ENCODE measurements at regions of chr5 and their contacts with region 1.

Region 1: GRCh38 chr5:126519634-126520592 is 75.1 kb downstream of the ALDH7A1 start:
- DNase-seq: peak; percentile 52
- H3K4me3 ChIP-seq: no peak overlapping the region
- H3K27ac ChIP-seq: peak overlapping the region; percentile 94 to 99 (median 94)
- H3K4me1 ChIP-seq: peaks cover 65 to 83% of the 10 kb centered on the region in 2 donors
- H3K27me3 ChIP-seq: no peaks in the 10 kb centered on the region
- CTCF ChIP-seq: no peak
- POLR2A ChIP-seq: peak in 1 of 2 donors; percentile 30

Region 2: DNA sequence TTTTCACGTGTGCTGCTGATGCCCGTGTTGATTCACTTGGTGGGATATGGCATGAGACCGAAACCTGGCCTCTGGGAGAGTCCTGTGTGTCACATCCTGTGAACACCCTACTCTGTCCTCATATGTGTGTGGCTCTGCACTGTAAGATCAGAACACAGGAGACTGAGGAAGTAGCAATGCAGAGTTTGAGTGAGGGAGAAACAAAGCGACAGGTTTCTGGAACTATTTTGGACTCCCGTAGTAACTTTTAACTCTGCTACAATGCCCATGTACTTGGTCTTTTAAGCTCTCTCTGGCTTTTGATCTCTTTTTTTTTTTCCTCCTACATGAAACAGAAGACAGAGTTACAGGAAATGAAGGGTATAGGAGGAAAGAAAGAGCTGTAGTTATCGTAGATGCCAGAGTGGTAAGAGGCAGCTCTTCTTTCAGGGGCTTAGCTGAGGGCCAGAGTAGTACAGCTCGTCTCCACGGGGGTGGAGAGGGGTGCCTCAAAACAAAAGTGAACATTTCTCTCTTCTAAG is 70.1 kb before region 1 on chr5:
- intact Hi-C with region 1: loop called (anchors 10 kb)
- DNase-seq: peak in 1 of 2 donors; percentile 32
- H3K4me3 ChIP-seq: no peak overlapping the region
- H3K27ac ChIP-seq: peak overlapping the region; percentile 87 to 95 (median 93)
- H3K4me1 ChIP-seq: peaks cover 52 to 85% of the 10 kb centered on the region in 2 donors
- H3K27me3 ChIP-seq: no peaks in the 10 kb centered on the region
- CTCF ChIP-seq: no peak
- POLR2A ChIP-seq: peak in 1 of 2 donors; percentile 48